ENCODE measurements at regions of chr1 and their contacts with region 1.

Region 1: DNA sequence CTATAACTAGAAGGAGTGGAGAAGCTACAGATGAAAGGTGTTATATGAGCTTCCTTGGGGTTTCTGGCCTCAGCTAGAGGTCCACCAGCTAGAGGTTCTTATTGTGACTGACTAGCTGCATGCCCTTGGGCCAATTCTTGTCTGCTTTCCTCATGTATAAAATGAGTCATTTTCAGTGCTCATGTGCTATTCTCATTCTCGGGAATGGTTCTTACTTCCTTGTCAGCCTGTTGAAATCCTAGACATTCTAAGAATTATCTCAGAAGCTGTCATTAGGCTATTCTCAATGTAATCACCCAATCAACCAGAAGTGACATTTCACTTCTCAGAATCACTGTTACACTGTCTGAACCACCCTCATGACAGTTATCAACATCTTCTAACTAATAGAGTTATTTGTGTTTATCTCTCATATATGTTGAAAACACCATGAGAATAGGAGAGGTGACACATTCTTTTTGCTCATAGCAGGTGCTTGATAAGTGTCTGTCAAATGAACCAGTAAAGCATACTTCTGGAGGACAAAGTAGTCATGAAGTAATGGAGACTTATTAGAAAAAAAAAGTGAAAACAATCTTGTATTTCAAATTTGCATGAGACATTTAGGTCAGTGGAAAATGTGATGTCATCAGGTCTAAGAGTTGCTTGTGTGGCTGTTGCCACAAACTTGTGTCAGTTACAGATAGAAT is 122.8 kb upstream of the IVNS1ABP start:
- DNase-seq: peak; percentile 44
- H3K4me3 Mint-ChIP-seq: no peak overlapping the region
- H3K27ac Mint-ChIP-seq: no peak overlapping the region
- H3K4me1 Mint-ChIP-seq: peaks cover 27% of the 10 kb centered on the region
- H3K27me3 Mint-ChIP-seq: no peaks in the 10 kb centered on the region

Region 2: DNA sequence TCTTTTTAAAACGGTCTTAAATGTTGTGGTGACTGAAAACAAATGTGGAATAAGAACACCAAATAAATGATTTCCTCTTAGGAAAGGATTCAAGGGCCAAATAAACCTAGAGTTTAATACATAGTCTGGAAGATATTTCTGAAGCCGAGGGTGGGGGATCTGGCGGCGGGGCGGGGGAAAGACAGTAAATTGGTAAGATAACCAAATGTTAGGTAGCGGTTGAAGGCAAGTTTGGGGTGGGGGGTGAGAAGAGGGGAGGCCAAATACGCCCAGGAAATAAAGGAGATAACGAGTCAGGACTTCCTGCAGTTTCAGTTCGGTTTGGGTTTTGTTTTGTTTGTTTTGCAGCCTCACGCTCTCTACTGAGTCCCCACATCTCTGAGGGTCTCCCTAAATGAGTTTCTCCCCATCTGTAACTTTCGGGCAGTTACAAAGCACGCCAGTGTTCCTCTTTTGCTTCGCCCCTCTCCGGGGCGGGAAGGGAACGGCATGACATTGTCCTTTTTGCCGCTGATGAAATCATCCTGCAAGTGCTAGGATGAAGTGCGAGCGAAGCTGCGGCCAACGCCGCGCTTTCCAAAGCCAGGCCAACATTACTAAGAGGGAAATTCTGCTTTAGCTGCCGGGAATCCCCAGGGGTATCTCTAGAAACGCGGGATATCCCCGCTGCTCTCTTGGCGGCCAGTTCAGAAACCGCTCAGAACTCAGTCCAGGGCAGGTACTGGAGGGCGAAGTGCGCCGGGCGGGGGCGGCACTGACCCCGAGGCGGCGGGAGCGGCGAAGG is 466.4 kb before region 1 on chr1:
- intact Hi-C with region 1: loop called (anchors 10 kb)
- DNase-seq: no peak
- H3K4me3 Mint-ChIP-seq: peak overlapping the region; percentile 90
- H3K27ac Mint-ChIP-seq: peak overlapping the region; percentile 95
- H3K4me1 Mint-ChIP-seq: peaks cover 67% of the 10 kb centered on the region
- H3K27me3 Mint-ChIP-seq: peaks cover 15% of the 10 kb centered on the region

Region 3: DNA sequence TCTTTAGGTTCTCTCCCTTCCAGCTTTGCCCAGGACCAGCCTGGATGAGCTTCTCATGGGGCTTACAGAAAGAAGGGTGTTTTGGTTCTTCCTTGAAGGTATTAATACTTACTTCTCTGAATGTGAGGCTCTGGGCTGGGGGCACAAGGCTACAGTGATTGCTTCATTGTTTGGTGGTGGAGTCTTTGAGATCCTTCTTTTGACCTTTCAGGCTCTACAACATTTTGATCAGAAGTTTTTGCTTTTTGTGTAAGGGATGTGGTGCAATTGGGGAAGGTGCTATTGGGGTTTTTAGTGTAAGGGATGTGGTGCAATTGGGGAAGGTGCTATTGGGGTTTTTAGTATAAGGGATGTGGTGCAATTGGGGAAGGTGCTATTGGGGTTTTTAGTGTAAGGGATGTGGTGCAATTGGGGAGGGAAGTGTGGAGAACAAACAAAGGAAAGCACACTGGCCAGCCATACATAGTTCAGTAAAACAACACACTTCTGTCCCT is 19.2 kb before region 1 on chr1:
- intact Hi-C with region 1: loop called (anchors 1 kb)
- DNase-seq: peak; percentile 49
- H3K4me3 Mint-ChIP-seq: peak overlapping the region; percentile 17
- H3K27ac Mint-ChIP-seq: peak overlapping the region; percentile 77
- H3K4me1 Mint-ChIP-seq: peaks cover 76% of the 10 kb centered on the region
- H3K27me3 Mint-ChIP-seq: no peaks in the 10 kb centered on the region

Region 4: DNA sequence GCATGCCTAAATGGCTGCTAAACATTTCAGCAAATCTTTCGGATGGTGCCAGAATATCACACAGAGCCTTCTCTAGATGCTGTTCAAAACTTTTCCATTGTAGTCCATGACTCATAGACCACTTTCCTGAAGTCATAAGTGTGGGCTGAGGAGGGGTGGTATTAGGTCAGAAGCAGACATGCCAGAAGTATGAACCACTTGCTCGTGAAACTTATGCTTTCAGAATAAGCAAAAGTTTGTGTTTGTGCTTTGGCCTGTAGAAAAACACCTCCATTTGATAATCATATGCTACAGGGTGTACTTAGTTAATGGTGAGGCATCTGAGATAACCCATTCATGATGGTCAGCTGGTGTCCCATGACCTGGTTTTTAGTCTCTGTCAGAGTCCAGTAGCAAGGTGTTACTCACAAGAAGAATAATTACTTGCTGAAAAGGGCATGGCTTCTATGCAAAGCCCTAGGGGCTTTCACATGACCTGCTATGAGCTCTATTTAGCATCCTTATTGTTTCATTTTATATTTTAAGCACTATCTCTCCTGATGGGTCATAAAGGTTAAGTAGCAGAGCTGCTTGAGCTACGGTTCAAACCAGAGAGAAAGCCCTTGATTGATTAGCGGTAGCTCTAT is 60.2 kb after region 1 on chr1:
- intact Hi-C with region 1: loop called (anchors 1 kb)
- DNase-seq: no peak
- H3K4me3 Mint-ChIP-seq: no peak overlapping the region
- H3K27ac Mint-ChIP-seq: peak overlapping the region; percentile 43
- H3K4me1 Mint-ChIP-seq: peaks cover 36% of the 10 kb centered on the region
- H3K27me3 Mint-ChIP-seq: peaks cover 3% of the 10 kb centered on the region

Region 5: DNA sequence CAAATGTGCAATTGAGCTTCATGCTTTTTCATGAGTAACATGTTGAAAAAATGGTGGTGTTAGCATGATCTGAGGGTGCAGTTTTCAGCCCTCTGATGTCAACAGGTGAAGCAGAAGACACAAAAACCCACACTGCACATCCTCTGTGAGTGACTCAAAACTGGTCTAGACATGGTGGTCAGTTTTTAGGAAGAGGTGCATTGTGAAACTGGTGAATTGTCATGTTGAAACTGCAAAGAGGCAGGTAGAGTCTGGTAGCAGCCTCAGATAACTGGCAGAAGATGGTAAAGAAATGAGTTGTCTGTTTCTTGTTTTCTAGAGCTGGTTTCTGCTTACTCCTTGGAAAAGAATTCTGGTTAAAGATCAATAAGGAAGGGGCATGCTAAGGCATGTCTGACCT is 197.0 kb after region 1 on chr1:
- intact Hi-C with region 1: loop called (anchors 1 kb)
- DNase-seq: peak; percentile 61
- H3K4me3 Mint-ChIP-seq: peak overlapping the region; percentile 27
- H3K27ac Mint-ChIP-seq: peak overlapping the region; percentile 89
- H3K4me1 Mint-ChIP-seq: peaks cover 17% of the 10 kb centered on the region
- H3K27me3 Mint-ChIP-seq: no peaks in the 10 kb centered on the region